ENCODE measurements at regions of chr9 and their contacts with region 1.

Region 1: GRCh38 chr9:98315551-98316060 is 60.2 kb upstream of the TBC1D2 start:
- DNase-seq: peak; percentile 91 to 95 (median 92)
- ATAC-seq: peak; percentile 87
- H3K4me3 ChIP-seq: no peak overlapping the region
- H3K27ac ChIP-seq: no peak overlapping the region; the same call in 2 of the 3 replicates
- H3K4me1 ChIP-seq: peaks cover 56 to 70% of the 10 kb centered on the region in 2 experiments
- H3K27me3 ChIP-seq: no peaks in the 10 kb centered on the region
- CTCF ChIP-seq: peak; percentile 98 to 99 (median 98)
- EP300 ChIP-seq: peak; percentile 52; the same call in 1 of the 2 replicates
- POLR2A ChIP-seq: no peak
- RAD21 ChIP-seq: peak; percentile 92 to 99

Region 2: GRCh38 chr9:98097836-98098235 is 217.8 kb before region 1 on chr9:
- CTCF ChIA-PET with region 1: no interaction called
- POLR2A ChIA-PET with region 1: no interaction called
- in situ Hi-C with region 1: no loop called
- intact Hi-C with region 1: no loop called
- DNase-seq: no peak
- ATAC-seq: no peak
- H3K4me3 ChIP-seq: no peak overlapping the region
- H3K27ac ChIP-seq: no peak overlapping the region
- H3K4me1 ChIP-seq: no peaks in the 10 kb centered on the region; a peak in 1 of 5 replicates
- H3K27me3 ChIP-seq: no peaks in the 10 kb centered on the region
- CTCF ChIP-seq: no peak
- EP300 ChIP-seq: no peak
- POLR2A ChIP-seq: no peak
- RAD21 ChIP-seq: no peak

Region 3: GRCh38 chr9:98365227-98365669 is 49.6 kb after region 1 on chr9:
- CTCF ChIA-PET with region 1: interaction called, 4 read pairs
- POLR2A ChIA-PET with region 1: no interaction called
- in situ Hi-C with region 1: no loop called
- intact Hi-C with region 1: loop called (anchors 2 kb)
- DNase-seq: peak; percentile 49 to 74 (median 55)
- ATAC-seq: no peak
- H3K4me3 ChIP-seq: no peak overlapping the region
- H3K27ac ChIP-seq: no peak overlapping the region
- H3K4me1 ChIP-seq: peaks cover 15 to 19% of the 10 kb centered on the region in 2 experiments
- H3K27me3 ChIP-seq: no peaks in the 10 kb centered on the region
- CTCF ChIP-seq: peak; percentile 54 to 78 (median 63)
- EP300 ChIP-seq: no peak
- POLR2A ChIP-seq: no peak
- RAD21 ChIP-seq: peak; percentile 19 to 72; a peak in 3 of 4 replicates

Region 4: DNA sequence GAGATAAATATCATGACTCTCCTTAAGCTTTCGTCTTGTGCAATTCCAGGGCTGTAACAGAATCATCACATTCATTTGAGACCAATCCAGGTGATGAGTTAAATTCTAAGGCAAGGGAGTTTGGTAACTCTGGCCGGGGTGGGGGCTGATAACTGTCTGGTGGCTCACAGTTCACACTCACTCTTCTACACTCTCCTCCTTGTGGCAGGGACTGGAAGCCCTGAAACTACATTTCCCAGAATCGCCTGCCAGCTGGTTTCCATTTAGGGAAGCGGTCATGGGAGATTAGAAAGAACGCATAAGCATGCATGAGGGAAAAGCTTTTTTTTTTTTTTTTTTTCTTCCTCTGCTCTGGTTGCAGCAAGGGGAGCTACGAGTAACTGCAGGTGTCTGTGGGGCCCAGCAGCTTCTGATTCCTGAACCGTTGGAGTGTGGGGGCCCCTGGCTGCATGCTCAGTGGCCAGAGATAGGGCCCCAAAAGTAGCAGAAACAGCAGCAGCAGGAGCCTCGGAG is 94.6 kb after region 1 on chr9:
- CTCF ChIA-PET with region 1: interaction called, 4 read pairs
- POLR2A ChIA-PET with region 1: no interaction called
- in situ Hi-C with region 1: no loop called
- intact Hi-C with region 1: loop called (anchors 10 kb)
- DNase-seq: peak; percentile 68 to 88 (median 80)
- ATAC-seq: peak; percentile 98
- H3K4me3 ChIP-seq: 0 out of 2 replicates have a peak overlapping the region, but pooled peaks have one; percentile 8
- H3K27ac ChIP-seq: peak overlapping the region; percentile 42; the same call in 2 of the 3 replicates
- H3K4me1 ChIP-seq: peaks cover 4 to 17% of the 10 kb centered on the region in 2 experiments; a peak in 4 of 5 replicates
- H3K27me3 ChIP-seq: no peaks in the 10 kb centered on the region
- CTCF ChIP-seq: peak in 2 of 3 experiments; percentile 35 to 41; a peak in 3 of 6 replicates
- EP300 ChIP-seq: peak; percentile 20; the same call in 1 of the 2 replicates
- POLR2A ChIP-seq: no peak; the same call in 1 of the 2 replicates
- RAD21 ChIP-seq: no peak

Region 5: DNA sequence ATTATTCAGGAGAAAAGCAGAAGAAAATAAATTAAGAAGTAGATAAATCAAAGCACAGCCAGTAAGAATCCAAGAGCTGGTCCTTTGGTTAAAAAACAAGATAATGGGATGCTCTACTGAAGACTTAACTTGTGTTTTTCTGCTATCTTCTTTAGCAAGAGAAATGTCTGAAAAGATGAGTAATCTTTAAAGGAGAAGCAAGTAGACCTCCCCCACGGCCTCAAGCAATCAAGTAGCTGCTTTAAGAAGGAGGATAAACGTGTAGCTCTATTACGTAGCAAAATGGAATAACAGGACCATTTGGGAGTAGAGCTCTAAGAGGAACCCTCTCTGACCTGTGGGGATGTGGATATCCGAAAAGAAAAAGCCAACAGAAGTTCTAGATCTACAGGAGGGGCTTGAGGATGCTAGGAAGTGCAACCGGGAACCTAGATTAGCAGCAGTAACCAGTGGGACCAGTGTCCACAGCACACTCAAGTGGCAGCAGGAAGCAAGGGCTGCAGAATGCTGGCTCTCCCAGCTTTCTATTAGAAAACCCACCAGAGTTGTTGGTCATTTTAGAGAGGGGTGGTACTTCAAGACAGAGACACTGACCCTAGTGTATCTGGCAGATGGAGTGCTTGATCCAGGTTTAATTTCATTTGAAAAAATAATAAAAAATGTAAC is 207.8 kb after region 1 on chr9:
- CTCF ChIA-PET with region 1: no interaction called
- POLR2A ChIA-PET with region 1: no interaction called
- in situ Hi-C with region 1: loop called (anchors 25 kb)
- intact Hi-C with region 1: loop called (anchors 1 kb)
- DNase-seq: peak in 1 of 4 experiments; percentile 37
- ATAC-seq: peak; percentile 85
- H3K4me3 ChIP-seq: no peak overlapping the region
- H3K27ac ChIP-seq: no peak overlapping the region
- H3K4me1 ChIP-seq: no peaks in the 10 kb centered on the region
- H3K27me3 ChIP-seq: no peaks in the 10 kb centered on the region
- CTCF ChIP-seq: peak; percentile 43 to 58 (median 57); a peak in 5 of 6 replicates
- EP300 ChIP-seq: no peak
- POLR2A ChIP-seq: no peak
- RAD21 ChIP-seq: peak; percentile 34 to 63; a peak in 3 of 4 replicates

Region 6: GRCh38 chr9:98575379-98576346 is 260.1 kb after region 1 on chr9:
- CTCF ChIA-PET with region 1: interaction called, 5 read pairs
- POLR2A ChIA-PET with region 1: no interaction called
- in situ Hi-C with region 1: no loop called
- intact Hi-C with region 1: loop called (anchors 10 kb)
- DNase-seq: peak; percentile 89 to 95 (median 92)
- ATAC-seq: peak; percentile 92
- H3K4me3 ChIP-seq: no peak overlapping the region
- H3K27ac ChIP-seq: peak overlapping the region; percentile 88
- H3K4me1 ChIP-seq: peaks cover 14 to 21% of the 10 kb centered on the region in 2 experiments
- H3K27me3 ChIP-seq: no peaks in the 10 kb centered on the region; a peak in 1 of 5 replicates
- CTCF ChIP-seq: no peak
- EP300 ChIP-seq: peak; percentile 72
- POLR2A ChIP-seq: no peak; the same call in 1 of the 2 replicates
- RAD21 ChIP-seq: 0 out of 4 replicates have a peak, but pooled peaks of 1 of the 2 experiments have one; percentile 8

Region 7: GRCh38 chr9:98775831-98776441 is 460.3 kb after region 1 on chr9:
- CTCF ChIA-PET with region 1: interaction called, 16 read pairs
- POLR2A ChIA-PET with region 1: no interaction called
- in situ Hi-C with region 1: loop called (anchors 10 kb)
- intact Hi-C with region 1: loop called (anchors 2 kb)
- DNase-seq: peak; percentile 80 to 81 (median 80)
- ATAC-seq: peak; percentile 93
- H3K4me3 ChIP-seq: no peak overlapping the region
- H3K27ac ChIP-seq: no peak overlapping the region
- H3K4me1 ChIP-seq: peaks cover 0 to 3% of the 10 kb centered on the region in 2 experiments; a peak in 1 of 5 replicates
- H3K27me3 ChIP-seq: no peaks in the 10 kb centered on the region
- CTCF ChIP-seq: peak; percentile 76 to 81 (median 81)
- EP300 ChIP-seq: no peak
- POLR2A ChIP-seq: no peak
- RAD21 ChIP-seq: peak; percentile 68 to 79